Sciatic nerve (tissue), 2 donors: ENCODE measurements at regions of chr10 and their contacts with region 1.

Region 1: GRCh38 chr10:64142395-64142794 is 621.2 kb downstream of the REEP3 start:
- DNase-seq: no peak
- ATAC-seq: no peak

Region 2: DNA sequence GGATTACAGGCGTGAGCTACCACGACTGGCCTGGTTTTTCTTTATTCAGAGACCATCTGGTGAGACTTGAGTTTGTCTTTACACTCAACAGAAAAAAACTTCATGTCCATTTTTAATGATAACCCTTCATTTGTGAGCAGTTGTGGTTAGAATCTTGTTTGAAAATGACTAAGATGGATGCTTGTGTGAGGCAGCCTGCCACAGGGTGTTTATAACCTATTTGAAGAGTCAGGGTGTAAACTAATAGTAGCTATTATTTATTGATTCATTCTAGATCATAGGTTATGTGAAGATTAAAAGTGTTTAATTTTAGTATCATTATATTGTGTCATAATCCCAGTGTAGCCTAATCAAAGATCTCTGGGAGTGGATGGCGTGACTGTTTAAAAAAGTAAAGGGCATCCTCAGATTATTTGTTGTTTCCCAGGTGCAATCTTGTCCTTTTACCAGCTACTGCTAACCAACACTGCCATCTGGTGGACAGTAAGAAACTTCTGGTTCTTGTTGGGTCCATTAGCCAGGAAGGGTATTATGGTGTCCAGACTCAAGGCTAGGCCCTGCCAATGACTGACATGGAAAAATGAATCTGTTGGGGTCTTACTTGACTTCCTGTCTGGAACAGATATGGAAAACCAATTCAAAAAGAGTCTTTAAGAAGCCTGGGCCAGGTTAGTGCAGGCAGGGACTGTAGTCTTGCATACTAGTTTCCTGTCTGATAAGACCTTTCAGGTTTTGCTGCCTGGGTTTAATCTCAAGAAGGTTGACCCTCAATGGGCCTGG is 984.4 kb before region 1 on chr10:
- intact Hi-C with region 1: no loop called
- DNase-seq: no peak
- ATAC-seq: peak; percentile 81

Region 3: DNA sequence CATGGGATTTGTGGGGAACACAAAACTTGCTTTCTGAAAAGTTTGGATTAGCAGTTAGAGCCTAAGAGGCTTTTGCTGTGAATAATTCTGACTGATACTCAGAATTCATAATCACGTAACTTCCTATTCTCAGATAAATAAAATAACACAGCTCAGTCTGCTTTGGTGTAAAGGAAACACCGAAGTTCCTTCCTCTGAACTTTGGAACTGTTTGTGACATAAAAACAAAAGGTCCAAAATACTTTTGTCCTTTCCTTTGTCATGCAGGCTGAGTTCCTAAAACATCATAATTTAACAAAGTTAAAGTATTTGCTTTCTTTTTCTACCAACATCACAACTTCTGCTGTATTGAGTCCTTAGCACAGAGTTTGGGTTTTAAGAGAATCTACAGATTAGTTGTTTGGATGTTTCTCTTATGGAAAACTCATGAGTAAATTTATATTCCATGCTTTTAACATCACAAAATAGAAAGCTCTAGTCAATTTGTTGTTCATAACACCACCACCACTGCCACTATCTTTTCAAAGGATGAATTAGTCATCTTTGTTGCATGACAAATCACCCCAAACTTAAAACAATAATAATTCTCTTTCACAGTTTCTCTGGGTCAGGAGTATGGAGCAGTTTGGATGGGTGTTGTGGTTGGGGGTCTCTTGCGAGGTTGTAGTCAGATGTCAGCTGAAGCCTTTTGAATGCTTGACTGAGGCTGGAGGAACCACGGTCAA is 497.8 kb before region 1 on chr10:
- intact Hi-C with region 1: no loop called
- DNase-seq: no peak
- ATAC-seq: no peak

Region 4: DNA sequence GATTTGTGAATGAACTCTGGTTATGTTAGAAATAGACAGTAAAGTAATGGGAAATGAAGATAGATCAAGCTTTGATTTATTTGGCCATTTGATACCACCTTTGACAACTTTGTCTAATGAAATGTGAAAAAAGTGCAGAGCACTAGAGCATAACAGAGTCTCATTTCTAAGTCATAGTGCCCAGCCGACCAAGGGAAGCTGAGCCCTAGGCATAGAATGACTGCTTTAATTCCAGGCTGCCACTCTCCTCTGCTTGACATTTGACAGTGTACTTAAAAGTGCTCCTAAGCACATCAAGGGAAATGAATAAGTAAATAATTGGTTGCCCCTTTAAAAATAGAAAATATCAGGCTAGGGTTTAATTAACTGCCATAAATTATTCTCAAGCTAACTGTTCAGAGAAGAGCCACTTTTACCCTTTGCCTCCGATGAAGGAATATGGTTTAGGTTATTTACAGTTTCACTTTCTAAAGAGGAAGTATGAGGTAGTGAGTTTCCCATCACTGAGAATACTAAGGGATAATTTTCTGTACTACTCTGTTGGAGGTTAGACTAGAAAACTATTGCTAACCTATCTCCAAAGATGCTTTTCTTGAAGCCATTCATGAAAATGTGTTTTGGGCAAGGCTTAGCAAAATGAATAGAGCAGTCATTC is 29.6 kb before region 1 on chr10:
- intact Hi-C with region 1: loop called (anchors 1 kb)
- DNase-seq: no peak
- ATAC-seq: no peak